ENCODE measurements at regions of chr2 and their contacts with region 1.

Region 1: GRCh38 chr2:155250800-155251199 is 552.3 kb downstream of the KCNJ3 start:
- DNase-seq: no peak
- H3K4me3 Mint-ChIP-seq: no peak overlapping the region
- H3K27ac Mint-ChIP-seq: no peak overlapping the region
- H3K4me1 Mint-ChIP-seq: no peaks in the 10 kb centered on the region
- H3K27me3 Mint-ChIP-seq: no peaks in the 10 kb centered on the region

Region 2: GRCh38 chr2:153963256-153963655 is 1287.5 kb before region 1 on chr2:
- CTCF ChIA-PET with region 1: no interaction called
- POLR2A ChIA-PET with region 1: no interaction called
- intact Hi-C with region 1: loop called (anchors 5 kb)
- DNase-seq: no peak
- H3K4me3 Mint-ChIP-seq: no peak overlapping the region
- H3K27ac Mint-ChIP-seq: no peak overlapping the region
- H3K4me1 Mint-ChIP-seq: no peaks in the 10 kb centered on the region
- H3K27me3 Mint-ChIP-seq: no peaks in the 10 kb centered on the region

Measured in activated CD4-positive, alpha-beta memory T cell treated with anti-CD3 and anti-CD28 coated beads for 36 hours (primary cell).